Natural killer cell (primary cell): ENCODE measurements at regions of chr22 and their contacts with region 1.

Region 1: DNA sequence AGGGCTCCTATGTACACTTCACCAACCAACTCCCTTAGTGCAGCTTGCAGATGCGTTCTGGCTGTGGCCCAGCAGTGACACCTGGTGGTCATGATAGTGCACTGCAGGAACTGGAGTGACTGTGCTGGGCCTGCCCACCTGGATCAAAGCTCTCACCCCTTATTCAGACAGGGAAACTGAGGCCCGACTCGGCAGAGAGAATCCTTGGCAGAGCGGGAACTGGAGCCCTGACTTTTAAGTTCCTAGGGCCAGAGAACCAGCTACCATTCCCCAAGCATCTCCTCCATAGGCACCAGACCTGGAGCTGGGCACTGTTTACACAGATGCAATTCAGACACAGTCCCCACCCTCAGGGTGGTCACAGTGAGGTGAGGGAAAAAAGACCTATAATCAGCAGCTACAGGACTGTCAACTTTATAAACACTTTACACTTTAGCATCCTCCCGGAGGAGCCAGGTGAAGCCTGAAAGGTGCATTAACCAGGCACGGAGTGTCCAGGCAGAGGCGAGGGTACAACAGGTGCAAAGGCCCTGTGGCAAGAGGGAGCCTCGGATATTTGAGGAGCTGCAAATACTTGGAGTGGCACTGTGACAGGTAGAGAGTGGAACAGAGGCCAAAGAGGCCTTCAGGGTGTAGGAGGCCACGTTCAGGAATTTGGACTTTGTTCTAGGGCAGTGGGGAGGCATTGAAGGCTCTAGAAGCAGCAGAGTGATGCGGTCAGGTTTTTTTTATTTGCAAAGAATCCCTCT is 22.0 kb downstream of the RHBDD3 start:
- DNase-seq: peak; percentile 64 to 80
- ATAC-seq: peak; percentile 89 to 100 (median 99)
- H3K4me3 ChIP-seq: no peak overlapping the region
- H3K4me3 Mint-ChIP-seq: no peak overlapping the region
- H3K27ac ChIP-seq: no peak overlapping the region
- H3K27ac Mint-ChIP-seq: no peak overlapping the region
- H3K4me1 ChIP-seq: no peaks in the 10 kb centered on the region
- H3K4me1 Mint-ChIP-seq: peaks cover 0 to 7% of the 10 kb centered on the region in 2 donors
- H3K27me3 ChIP-seq: no peaks in the 10 kb centered on the region
- H3K27me3 Mint-ChIP-seq: peaks cover 0 to 9% of the 10 kb centered on the region in 2 donors
- CTCF ChIP-seq: peak; percentile 92

Region 2: GRCh38 chr22:28019881-28020871 is 1225.6 kb before region 1 on chr22:
- intact Hi-C with region 1: loop called (anchors 2 kb)
- DNase-seq: peak; percentile 52 to 74
- ATAC-seq: peak; percentile 67 to 90 (median 80)
- H3K4me3 ChIP-seq: no peak overlapping the region
- H3K4me3 Mint-ChIP-seq: no peak overlapping the region
- H3K27ac ChIP-seq: no peak overlapping the region
- H3K27ac Mint-ChIP-seq: peak overlapping the region in 1 of 2 donors; percentile 47
- H3K4me1 ChIP-seq: no peaks in the 10 kb centered on the region
- H3K4me1 Mint-ChIP-seq: peaks cover 5 to 6% of the 10 kb centered on the region in 2 donors
- H3K27me3 ChIP-seq: no peaks in the 10 kb centered on the region
- H3K27me3 Mint-ChIP-seq: peaks cover 0 to 3% of the 10 kb centered on the region in 2 donors
- CTCF ChIP-seq: peak; percentile 76

Region 3: GRCh38 chr22:28600546-28601143 is 645.2 kb before region 1 on chr22:
- intact Hi-C with region 1: loop called (anchors 1 kb)
- DNase-seq: peak in 1 of 2 donors; percentile 73
- ATAC-seq: peak in 2 of 3 donors; percentile 34 to 53
- H3K4me3 ChIP-seq: no peak overlapping the region
- H3K4me3 Mint-ChIP-seq: no peak overlapping the region
- H3K27ac ChIP-seq: no peak overlapping the region
- H3K27ac Mint-ChIP-seq: no peak overlapping the region
- H3K4me1 ChIP-seq: no peaks in the 10 kb centered on the region
- H3K4me1 Mint-ChIP-seq: no peaks in the 10 kb centered on the region
- H3K27me3 ChIP-seq: peaks cover 2% of the 10 kb centered on the region
- H3K27me3 Mint-ChIP-seq: peaks cover 9 to 11% of the 10 kb centered on the region in 2 donors
- CTCF ChIP-seq: peak; percentile 78

Region 4: GRCh38 chr22:28855355-28856094 is 390.3 kb before region 1 on chr22:
- intact Hi-C with region 1: loop called (anchors 2 kb)
- DNase-seq: peak; percentile 19 to 82
- ATAC-seq: peak; percentile 62 to 69 (median 68)
- H3K4me3 ChIP-seq: no peak overlapping the region
- H3K4me3 Mint-ChIP-seq: no peak overlapping the region
- H3K27ac ChIP-seq: no peak overlapping the region
- H3K27ac Mint-ChIP-seq: no peak overlapping the region
- H3K4me1 ChIP-seq: no peaks in the 10 kb centered on the region
- H3K4me1 Mint-ChIP-seq: no peaks in the 10 kb centered on the region
- H3K27me3 ChIP-seq: no peaks in the 10 kb centered on the region
- H3K27me3 Mint-ChIP-seq: peaks cover 7 to 8% of the 10 kb centered on the region in 2 donors
- CTCF ChIP-seq: peak; percentile 89

Region 5: GRCh38 chr22:29202212-29203192 is 43.3 kb before region 1 on chr22:
- intact Hi-C with region 1: loop called (anchors 5 kb)
- DNase-seq: peak; percentile 39 to 55
- ATAC-seq: peak; percentile 70 to 86 (median 72)
- H3K4me3 ChIP-seq: no peak overlapping the region
- H3K4me3 Mint-ChIP-seq: peak overlapping the region; percentile 63
- H3K27ac ChIP-seq: peak overlapping the region; percentile 50
- H3K27ac Mint-ChIP-seq: peak overlapping the region; percentile 53 to 75
- H3K4me1 ChIP-seq: peaks cover 39% of the 10 kb centered on the region
- H3K4me1 Mint-ChIP-seq: peaks cover 32 to 42% of the 10 kb centered on the region in 2 donors
- H3K27me3 ChIP-seq: peaks cover 6% of the 10 kb centered on the region
- H3K27me3 Mint-ChIP-seq: peaks cover 0 to 3% of the 10 kb centered on the region in 2 donors
- CTCF ChIP-seq: no peak